ENCODE measurements at regions of chr15 and their contacts with region 1.

Region 1: GRCh38 chr15:39786447-39787056 is 3.9 kb upstream of the FSIP1 start:
- DNase-seq: peak in 2 of 35 experiments; percentile 13 to 64
- ATAC-seq: no peak
- H3K4me3 ChIP-seq: no peak overlapping the region
- H3K4me3 Mint-ChIP-seq: no peak overlapping the region
- H3K27ac ChIP-seq: no peak overlapping the region
- H3K27ac Mint-ChIP-seq: peak overlapping the region; percentile 40 to 65
- H3K4me1 ChIP-seq: peaks cover 11 to 15% of the 10 kb centered on the region in 2 experiments
- H3K4me1 Mint-ChIP-seq: peaks cover 44 to 52% (median 48%) of the 10 kb centered on the region in 3 donors
- H3K27me3 ChIP-seq: no peaks in the 10 kb centered on the region
- H3K27me3 Mint-ChIP-seq: no peaks in the 10 kb centered on the region

Region 2: GRCh38 chr15:39358441-39359041 is 428.0 kb before region 1 on chr15:
- CTCF ChIA-PET with region 1: no interaction called
- POLR2A ChIA-PET with region 1: interaction called in 1 of 2 experiments, 11 read pairs
- DNase-seq: no peak
- ATAC-seq: no peak
- H3K4me3 ChIP-seq: no peak overlapping the region
- H3K4me3 Mint-ChIP-seq: no peak overlapping the region
- H3K27ac ChIP-seq: no peak overlapping the region
- H3K27ac Mint-ChIP-seq: no peak overlapping the region
- H3K4me1 ChIP-seq: no peaks in the 10 kb centered on the region
- H3K4me1 Mint-ChIP-seq: no peaks in the 10 kb centered on the region
- H3K27me3 ChIP-seq: no peaks in the 10 kb centered on the region
- H3K27me3 Mint-ChIP-seq: peaks cover under 1 to 7% of the 10 kb centered on the region in 2 donors

Region 3: DNA sequence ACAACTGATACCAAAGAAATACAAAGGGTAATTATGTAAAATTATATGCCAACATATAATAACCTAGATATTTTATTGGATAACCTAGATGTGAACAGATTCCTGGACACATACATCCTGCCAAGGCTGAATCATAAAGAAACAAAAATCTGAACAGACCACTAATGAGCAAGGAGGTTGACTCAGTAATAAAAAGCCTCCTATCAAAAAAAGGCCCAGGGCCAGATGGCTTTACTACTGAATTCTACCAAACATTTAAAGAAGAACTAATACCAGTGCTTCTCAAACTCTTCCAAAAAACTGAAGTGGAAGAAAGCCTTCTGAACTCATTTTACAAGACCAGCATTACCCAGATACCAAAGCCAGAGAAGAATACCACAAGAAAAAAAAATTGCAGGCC is 173.3 kb before region 1 on chr15:
- CTCF ChIA-PET with region 1: no interaction called
- POLR2A ChIA-PET with region 1: no interaction called
- DNase-seq: no peak
- ATAC-seq: no peak
- H3K4me3 ChIP-seq: no peak overlapping the region
- H3K4me3 Mint-ChIP-seq: no peak overlapping the region
- H3K27ac ChIP-seq: no peak overlapping the region
- H3K27ac Mint-ChIP-seq: no peak overlapping the region
- H3K4me1 ChIP-seq: peaks cover 0 to 12% of the 10 kb centered on the region in 2 experiments
- H3K4me1 Mint-ChIP-seq: peaks cover 0 to 9% (median 0%) of the 10 kb centered on the region in 3 donors
- H3K27me3 ChIP-seq: no peaks in the 10 kb centered on the region
- H3K27me3 Mint-ChIP-seq: no peaks in the 10 kb centered on the region

Region 4: DNA sequence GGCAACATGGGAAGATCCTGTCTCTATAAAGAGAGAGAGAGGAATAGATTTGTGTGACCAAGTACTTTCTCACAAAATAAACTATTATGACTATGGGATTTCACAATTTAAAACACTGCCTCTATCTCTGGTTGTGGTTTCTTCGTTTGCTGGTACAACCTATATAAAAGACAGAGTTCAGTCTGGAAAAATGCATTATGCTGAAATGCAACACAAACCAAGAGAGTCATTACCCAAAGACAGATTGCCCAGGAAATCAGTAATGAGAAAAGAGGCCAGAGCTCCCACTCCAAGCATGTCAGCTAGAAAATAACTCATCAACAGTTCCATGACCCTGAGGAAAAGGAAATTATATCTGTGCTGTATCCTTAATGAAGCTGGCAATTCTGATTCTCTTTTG is 110.3 kb after region 1 on chr15:
- CTCF ChIA-PET with region 1: interaction called in 1 of 2 experiments, 10 read pairs
- POLR2A ChIA-PET with region 1: no interaction called
- DNase-seq: no peak
- ATAC-seq: no peak
- H3K4me3 ChIP-seq: no peak overlapping the region
- H3K4me3 Mint-ChIP-seq: no peak overlapping the region
- H3K27ac ChIP-seq: no peak overlapping the region
- H3K27ac Mint-ChIP-seq: no peak overlapping the region
- H3K4me1 ChIP-seq: no peaks in the 10 kb centered on the region
- H3K4me1 Mint-ChIP-seq: no peaks in the 10 kb centered on the region
- H3K27me3 ChIP-seq: peaks cover 0 to 3% of the 10 kb centered on the region in 2 experiments
- H3K27me3 Mint-ChIP-seq: peaks cover 3 to 17% of the 10 kb centered on the region in 2 donors

Region 5: GRCh38 chr15:39944726-39945125 is 158.2 kb after region 1 on chr15:
- CTCF ChIA-PET with region 1: no interaction called
- POLR2A ChIA-PET with region 1: no interaction called
- DNase-seq: no peak
- ATAC-seq: no peak
- H3K4me3 ChIP-seq: no peak overlapping the region
- H3K4me3 Mint-ChIP-seq: no peak overlapping the region
- H3K27ac ChIP-seq: no peak overlapping the region
- H3K27ac Mint-ChIP-seq: no peak overlapping the region
- H3K4me1 ChIP-seq: peaks cover 0 to 4% of the 10 kb centered on the region in 2 experiments
- H3K4me1 Mint-ChIP-seq: no peaks in the 10 kb centered on the region
- H3K27me3 ChIP-seq: no peaks in the 10 kb centered on the region
- H3K27me3 Mint-ChIP-seq: no peaks in the 10 kb centered on the region

Measured in T-cell (primary cell).